Left lung (tissue), 14 donors: ENCODE measurements at regions of chr1 and their contacts with region 1.

Region 1: GRCh38 chr1:235075188-235075926 is 53.3 kb downstream of the TOMM20 start:
- DNase-seq: peak in 2 of 4 donors; percentile 84 to 87
- ATAC-seq: peak; percentile 58
- H3K4me3 ChIP-seq: no peak overlapping the region
- H3K27ac ChIP-seq: peak overlapping the region; percentile 88 to 92
- H3K4me1 ChIP-seq: peaks cover 35 to 91% of the 10 kb centered on the region in 2 donors
- H3K27me3 ChIP-seq: no peaks in the 10 kb centered on the region
- CTCF ChIP-seq: no peak

Region 2: DNA sequence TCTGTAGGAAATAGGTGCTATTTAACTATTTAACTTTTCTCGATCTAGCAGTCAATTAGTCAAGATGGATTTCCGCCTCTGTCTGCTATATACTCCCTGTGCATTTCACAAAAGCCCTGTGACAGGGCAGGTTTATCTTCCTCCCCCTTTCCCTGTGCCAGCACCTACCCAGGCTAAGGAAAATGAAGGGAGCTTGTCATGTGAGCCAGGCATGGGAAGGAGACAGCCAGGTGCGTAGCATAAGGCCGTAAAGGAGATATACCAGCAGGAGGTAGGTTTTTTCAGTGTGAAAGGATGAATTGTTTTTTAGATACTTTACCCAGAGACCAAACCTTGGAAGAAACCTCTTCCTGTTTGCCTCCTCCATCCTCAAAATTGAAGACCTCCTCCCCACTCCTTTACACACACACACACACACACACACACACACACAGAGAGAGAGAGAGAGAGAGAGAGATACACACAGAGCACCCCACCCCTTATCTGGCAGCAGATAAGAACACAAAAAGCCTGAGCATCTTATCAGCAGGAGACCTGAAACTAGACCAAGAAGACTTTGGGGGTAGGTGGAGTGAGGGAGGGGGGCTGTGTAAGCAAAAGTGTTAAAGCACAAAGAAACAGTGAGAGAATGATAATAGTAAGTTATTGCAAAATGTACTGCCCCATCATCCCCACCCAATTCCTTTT is 584.4 kb before region 1 on chr1:
- intact Hi-C with region 1: loop called in 1 of 2 experiments (anchors 5 kb)
- DNase-seq: no peak
- ATAC-seq: no peak
- H3K4me3 ChIP-seq: no peak overlapping the region
- H3K27ac ChIP-seq: no peak overlapping the region
- H3K4me1 ChIP-seq: peaks cover 0 to 13% of the 10 kb centered on the region in 2 donors
- H3K27me3 ChIP-seq: no peaks in the 10 kb centered on the region
- CTCF ChIP-seq: no peak

Region 3: GRCh38 chr1:234599617-234600417 is 475.5 kb before region 1 on chr1:
- intact Hi-C with region 1: loop called in 1 of 2 experiments (anchors 10 kb)
- DNase-seq: peak in 3 of 4 donors; percentile 86 to 95 (median 91)
- ATAC-seq: peak; percentile 85
- H3K4me3 ChIP-seq: peak overlapping the region; percentile 35 to 55
- H3K27ac ChIP-seq: peak overlapping the region; percentile 99 to 100
- H3K4me1 ChIP-seq: peaks cover 35 to 66% of the 10 kb centered on the region in 2 donors
- H3K27me3 ChIP-seq: no peaks in the 10 kb centered on the region
- CTCF ChIP-seq: no peak

Region 4: DNA sequence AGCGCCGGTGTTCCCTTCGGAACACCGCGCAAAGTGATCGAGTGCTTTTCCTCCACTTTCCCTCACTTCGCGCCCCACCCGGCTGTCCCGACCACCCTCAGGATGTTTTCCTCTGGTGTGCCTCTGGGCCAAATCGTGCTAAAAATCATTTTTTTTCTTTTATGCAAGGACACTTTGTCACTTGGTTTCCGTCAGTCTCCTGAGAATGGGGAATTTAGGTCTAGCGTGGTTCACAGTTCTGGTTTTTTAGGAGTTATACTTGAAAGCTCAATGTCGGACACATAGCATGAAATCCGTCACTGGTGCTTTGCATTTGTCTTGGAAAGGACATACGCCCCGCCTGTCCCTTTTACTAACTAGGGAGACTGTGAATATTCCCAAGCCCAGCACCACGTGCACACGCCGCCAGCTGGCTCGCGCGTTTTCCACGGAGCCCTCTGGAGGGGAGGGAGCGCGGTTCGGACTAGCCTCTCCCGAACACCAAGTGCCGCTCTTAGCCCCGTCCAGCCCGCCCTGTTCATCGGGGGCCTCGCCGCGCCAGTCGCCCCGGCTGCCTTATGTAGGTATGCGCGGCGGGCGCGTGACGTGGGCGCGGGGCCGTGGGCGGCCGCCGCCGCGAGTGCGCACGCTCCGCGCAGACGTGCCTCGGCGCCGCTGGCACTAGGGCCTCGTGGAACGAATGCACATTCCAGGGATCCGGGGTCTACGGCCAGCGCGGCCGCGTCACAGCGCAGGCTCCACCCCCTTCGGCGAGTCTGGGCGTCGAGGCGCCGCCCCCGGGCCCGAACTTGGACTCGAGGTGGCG is 464.8 kb before region 1 on chr1:
- intact Hi-C with region 1: loop called in 1 of 2 experiments (anchors 5 kb)
- DNase-seq: peak; percentile 94 to 98 (median 96)
- ATAC-seq: peak; percentile 66
- H3K4me3 ChIP-seq: peak overlapping the region; percentile 31 to 44
- H3K27ac ChIP-seq: peak overlapping the region; percentile 95 to 98
- H3K4me1 ChIP-seq: peaks cover 12 to 62% of the 10 kb centered on the region in 2 donors
- H3K27me3 ChIP-seq: no peaks in the 10 kb centered on the region
- CTCF ChIP-seq: no peak